PC-3 (cell line): ENCODE measurements at regions of chr4 and their contacts with region 1.

Region 1: DNA sequence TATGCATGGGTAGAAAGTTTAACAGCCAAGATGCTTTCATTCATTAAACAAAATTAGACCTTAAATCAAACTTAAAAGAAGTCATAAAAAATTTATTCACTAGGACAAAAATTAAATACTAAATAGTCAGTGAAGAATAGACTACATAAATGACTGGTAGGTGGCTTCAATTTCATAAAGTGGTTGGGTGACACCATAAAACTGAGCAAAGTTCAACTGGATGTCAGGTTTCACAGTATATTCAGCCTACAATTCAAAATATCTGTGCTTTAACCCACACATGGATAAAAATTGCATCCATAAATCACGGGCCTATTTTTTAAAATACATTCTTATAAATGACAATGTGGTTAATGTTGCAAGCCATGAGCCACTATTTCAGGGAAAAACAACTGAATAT is 582.3 kb downstream of the IL15 start:
- DNase-seq: no peak
- ATAC-seq: no peak
- H3K4me3 ChIP-seq: no peak overlapping the region
- H3K27ac ChIP-seq: no peak overlapping the region
- H3K4me1 ChIP-seq: no peaks in the 10 kb centered on the region
- H3K27me3 ChIP-seq: no peaks in the 10 kb centered on the region
- CTCF ChIP-seq: no peak

Region 2: DNA sequence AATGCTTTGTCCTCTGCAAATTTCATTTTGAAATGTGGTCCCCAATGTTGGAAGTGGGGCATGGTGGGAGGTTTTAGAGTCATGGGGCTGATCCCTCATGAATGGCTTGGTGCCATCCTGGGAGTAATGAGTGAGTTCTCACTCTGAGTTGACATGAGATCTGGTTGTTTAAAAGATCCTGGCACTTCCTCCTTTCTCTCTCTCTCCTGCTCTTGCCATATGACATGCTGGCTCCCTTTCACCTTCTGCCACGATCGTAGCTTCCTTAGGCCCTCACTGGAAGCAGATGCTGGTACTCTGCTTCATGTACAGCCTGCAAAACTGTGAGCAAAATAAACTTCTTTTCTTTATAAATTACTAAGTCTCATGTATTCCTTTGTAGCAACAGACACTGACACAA is 320.4 kb before region 1 on chr4:
- CTCF ChIA-PET with region 1: no interaction called
- POLR2A ChIA-PET with region 1: no interaction called
- intact Hi-C with region 1: no loop called
- DNase-seq: no peak
- ATAC-seq: no peak
- H3K4me3 ChIP-seq: no peak overlapping the region
- H3K27ac ChIP-seq: no peak overlapping the region
- H3K4me1 ChIP-seq: peaks cover 40% of the 10 kb centered on the region
- H3K27me3 ChIP-seq: no peaks in the 10 kb centered on the region
- CTCF ChIP-seq: no peak

Region 3: GRCh38 chr4:142264961-142265360 is 46.2 kb after region 1 on chr4:
- CTCF ChIA-PET with region 1: no interaction called
- POLR2A ChIA-PET with region 1: no interaction called
- intact Hi-C with region 1: loop called (anchors 5 kb)
- DNase-seq: peak; percentile 55
- ATAC-seq: peak; percentile 45
- H3K4me3 ChIP-seq: peak overlapping the region; percentile 26; the same call in 1 of the 2 replicates
- H3K27ac ChIP-seq: peak overlapping the region; percentile 88
- H3K4me1 ChIP-seq: peaks cover 31% of the 10 kb centered on the region
- H3K27me3 ChIP-seq: no peaks in the 10 kb centered on the region
- CTCF ChIP-seq: no peak

Region 4: GRCh38 chr4:142944562-142944961 is 725.8 kb after region 1 on chr4:
- CTCF ChIA-PET with region 1: no interaction called
- POLR2A ChIA-PET with region 1: no interaction called
- intact Hi-C with region 1: no loop called
- DNase-seq: no peak
- ATAC-seq: no peak
- H3K4me3 ChIP-seq: no peak overlapping the region
- H3K27ac ChIP-seq: no peak overlapping the region
- H3K4me1 ChIP-seq: no peaks in the 10 kb centered on the region
- H3K27me3 ChIP-seq: peaks cover 21% of the 10 kb centered on the region
- CTCF ChIP-seq: no peak